ENCODE measurements at regions of chr12 and their contacts with region 1.

Region 1: DNA sequence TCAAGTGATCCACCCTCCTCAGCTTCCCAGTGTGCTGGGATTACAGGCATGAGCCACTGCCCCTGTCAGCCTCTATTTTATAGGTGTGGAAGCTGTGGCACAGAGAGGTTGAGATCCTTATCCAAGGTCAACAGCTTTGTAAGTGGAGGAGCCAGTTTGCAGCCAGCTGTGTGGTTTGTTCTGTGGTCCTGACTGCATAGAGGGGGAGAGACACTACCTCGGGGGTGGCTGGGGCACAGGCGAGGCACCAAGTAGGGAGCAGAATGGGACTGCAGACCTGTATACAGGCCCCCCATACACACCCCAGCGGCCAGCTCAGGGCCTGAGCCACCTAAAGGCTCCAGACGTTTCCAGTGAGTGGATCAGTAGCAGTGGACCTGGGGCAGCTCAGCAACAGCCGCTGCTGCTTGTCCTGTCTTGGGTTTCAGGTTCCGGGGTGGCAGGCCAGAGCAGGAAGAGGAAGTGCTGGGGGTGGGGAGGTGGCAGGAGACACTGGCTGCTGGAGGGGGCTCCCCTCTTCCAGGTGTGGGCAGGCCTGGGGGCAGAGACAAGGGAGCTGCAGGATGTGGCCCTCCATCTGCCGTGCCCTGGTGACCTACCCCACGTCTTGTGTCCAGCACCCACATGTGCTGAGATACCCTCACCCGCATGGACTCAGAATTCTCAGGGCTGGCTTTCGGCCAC is 11.0 kb downstream of the ORAI1 start:
- DNase-seq: peak in 8 of 9 donors; percentile 38 to 53 (median 46)
- ATAC-seq: peak; percentile 79
- H3K4me3 ChIP-seq: peak overlapping the region; percentile 1
- H3K4me3 Mint-ChIP-seq: peak overlapping the region; percentile 61 to 82 (median 76)
- H3K27ac ChIP-seq: peak overlapping the region; percentile 83
- H3K27ac Mint-ChIP-seq: peak overlapping the region; percentile 82 to 95 (median 92)
- H3K4me1 ChIP-seq: peaks cover 35 to 50% of the 10 kb centered on the region in 2 donors
- H3K4me1 Mint-ChIP-seq: peaks cover 48 to 75% (median 61%) of the 10 kb centered on the region in 7 donors
- H3K27me3 ChIP-seq: no peaks in the 10 kb centered on the region
- H3K27me3 Mint-ChIP-seq: no peaks in the 10 kb centered on the region

Region 2: DNA sequence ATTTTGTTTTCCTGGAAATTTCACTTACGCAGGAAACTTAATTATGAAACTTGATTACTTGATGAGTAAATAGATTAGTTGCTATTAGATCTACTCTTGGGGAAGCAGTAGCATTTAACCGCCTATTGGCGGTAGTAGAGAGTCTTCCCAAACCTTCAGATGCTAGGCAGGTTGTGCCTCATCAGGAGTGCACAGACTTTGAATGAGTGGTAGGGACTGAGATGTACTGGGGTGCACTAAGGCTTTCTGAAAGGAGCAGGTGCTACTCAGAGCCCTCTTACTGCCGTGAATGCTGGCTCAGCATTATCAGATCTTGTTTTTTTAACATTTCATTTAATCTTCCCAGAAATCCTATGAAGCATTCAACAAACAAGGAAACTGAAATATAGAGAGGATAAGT is 1183.4 kb before region 1 on chr12:
- CTCF ChIA-PET with region 1: no interaction called
- POLR2A ChIA-PET with region 1: no interaction called
- intact Hi-C with region 1: no loop called
- DNase-seq: peak in 4 of 9 donors; percentile 23 to 41 (median 28)
- ATAC-seq: peak; percentile 90
- H3K4me3 ChIP-seq: no peak overlapping the region
- H3K4me3 Mint-ChIP-seq: no peak overlapping the region
- H3K27ac ChIP-seq: no peak overlapping the region
- H3K27ac Mint-ChIP-seq: peak overlapping the region in 3 of 9 donors; percentile 30 to 65 (median 42)
- H3K4me1 ChIP-seq: peaks cover 0 to 3% of the 10 kb centered on the region in 2 donors
- H3K4me1 Mint-ChIP-seq: peaks cover 5 to 16% (median 8%) of the 10 kb centered on the region in 7 donors
- H3K27me3 ChIP-seq: no peaks in the 10 kb centered on the region
- H3K27me3 Mint-ChIP-seq: no peaks in the 10 kb centered on the region

Region 3: DNA sequence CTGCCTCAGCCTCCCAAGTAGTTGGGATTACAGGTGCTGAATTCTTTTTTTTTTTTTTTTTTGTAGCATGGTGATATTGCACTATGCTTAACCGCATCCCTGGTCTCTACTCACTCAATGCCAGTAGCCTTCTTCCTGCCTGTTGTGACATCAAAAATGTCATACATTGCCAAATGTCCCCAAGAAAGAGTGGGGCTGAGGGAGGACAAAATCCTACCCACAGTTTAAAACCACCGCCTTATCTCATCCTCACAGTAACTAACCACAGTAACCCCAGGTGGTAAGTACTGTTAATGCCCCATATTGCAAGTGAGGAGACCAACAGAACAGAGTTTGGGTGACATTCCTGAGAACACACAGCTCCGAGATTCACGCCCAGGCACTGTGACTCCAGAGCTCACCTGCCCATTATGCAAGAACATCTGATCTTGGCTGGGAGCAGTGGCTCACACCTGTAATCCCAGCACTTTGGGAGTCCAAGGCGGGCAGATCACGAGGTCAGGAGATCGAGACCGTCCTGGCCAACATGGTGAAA is 12.5 kb after region 1 on chr12:
- CTCF ChIA-PET with region 1: interaction called, 8 read pairs
- POLR2A ChIA-PET with region 1: interaction called, 89 read pairs
- intact Hi-C with region 1: no loop called
- DNase-seq: peak in 1 of 9 donors; percentile 23
- ATAC-seq: peak; percentile 88
- H3K4me3 ChIP-seq: no peak overlapping the region
- H3K4me3 Mint-ChIP-seq: peak overlapping the region; percentile 22 to 70 (median 58)
- H3K27ac ChIP-seq: no peak overlapping the region
- H3K27ac Mint-ChIP-seq: peak overlapping the region; percentile 16 to 92 (median 80)
- H3K4me1 ChIP-seq: peaks cover 14 to 16% of the 10 kb centered on the region in 2 donors
- H3K4me1 Mint-ChIP-seq: peaks cover 14 to 41% (median 36%) of the 10 kb centered on the region in 7 donors
- H3K27me3 ChIP-seq: no peaks in the 10 kb centered on the region
- H3K27me3 Mint-ChIP-seq: no peaks in the 10 kb centered on the region

Region 4: GRCh38 chr12:121657305-121658008 is 20.1 kb after region 1 on chr12:
- CTCF ChIA-PET with region 1: interaction called, 4 read pairs
- POLR2A ChIA-PET with region 1: interaction called, 89 read pairs
- intact Hi-C with region 1: no loop called
- DNase-seq: peak in 1 of 9 donors; percentile 37
- ATAC-seq: no peak
- H3K4me3 ChIP-seq: no peak overlapping the region
- H3K4me3 Mint-ChIP-seq: peak overlapping the region; percentile 31 to 99 (median 68)
- H3K27ac ChIP-seq: peak overlapping the region; percentile 35
- H3K27ac Mint-ChIP-seq: peak overlapping the region; percentile 70 to 100 (median 97)
- H3K4me1 ChIP-seq: peaks cover 38 to 47% of the 10 kb centered on the region in 2 donors
- H3K4me1 Mint-ChIP-seq: peaks cover 43 to 77% (median 64%) of the 10 kb centered on the region in 7 donors
- H3K27me3 ChIP-seq: no peaks in the 10 kb centered on the region
- H3K27me3 Mint-ChIP-seq: no peaks in the 10 kb centered on the region